Esophagus muscularis mucosa (tissue), 4 donors: ENCODE measurements at regions of chr20 and their contacts with region 1.

Region 1: DNA sequence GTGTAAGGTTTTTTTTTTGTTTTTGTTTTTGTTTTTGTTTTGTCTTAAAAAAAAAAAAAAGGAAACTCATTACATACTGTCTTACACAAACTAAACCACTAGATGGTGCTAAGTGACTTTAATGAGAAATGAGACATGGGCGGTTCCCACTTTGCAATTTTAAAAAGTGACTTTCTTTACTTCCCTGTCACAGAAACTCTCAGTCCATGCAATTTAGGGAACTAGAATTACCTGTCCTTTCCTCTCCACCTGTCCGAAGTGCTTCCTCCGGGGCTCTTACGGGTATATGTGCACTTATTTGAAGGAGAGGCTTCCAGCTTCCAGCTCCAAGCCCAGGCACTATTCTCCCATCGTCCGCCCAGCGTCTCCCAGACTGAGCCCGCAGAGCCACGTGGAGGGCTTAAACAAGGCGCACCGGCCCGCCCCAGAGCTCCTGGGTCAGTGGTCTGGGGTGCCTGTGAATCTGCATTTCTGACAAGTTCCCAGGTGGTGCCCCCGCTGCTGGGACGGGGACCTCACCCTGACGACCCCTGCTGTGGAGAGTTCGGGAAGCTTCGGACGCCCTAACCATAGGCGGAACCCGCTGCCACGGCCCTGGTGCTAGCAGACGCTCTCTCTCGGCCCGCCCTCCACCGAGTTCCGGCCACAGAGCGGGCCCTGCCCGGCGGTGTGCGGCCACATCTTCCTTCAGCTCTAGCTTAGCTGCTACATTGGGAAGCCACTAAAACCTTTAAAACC is 26.1 kb downstream of the BFSP1 start:
- DNase-seq: no peak
- H3K4me3 ChIP-seq: peak overlapping the region; percentile 54 to 66 (median 59)
- H3K27ac ChIP-seq: peak overlapping the region in 3 of 4 donors; percentile 1 to 53 (median 50)
- H3K4me1 ChIP-seq: peaks cover 8 to 19% (median 15%) of the 10 kb centered on the region in 4 donors
- H3K27me3 ChIP-seq: no peaks in the 10 kb centered on the region
- CTCF ChIP-seq: peak; percentile 62 to 82 (median 71)
- EP300 ChIP-seq: no peak
- POLR2A ChIP-seq: no peak

Region 2: GRCh38 chr20:17358874-17359273 is 146.2 kb before region 1 on chr20:
- intact Hi-C with region 1: no loop called
- DNase-seq: no peak
- H3K4me3 ChIP-seq: no peak overlapping the region
- H3K27ac ChIP-seq: no peak overlapping the region
- H3K4me1 ChIP-seq: no peaks in the 10 kb centered on the region
- H3K27me3 ChIP-seq: no peaks in the 10 kb centered on the region
- CTCF ChIP-seq: no peak
- EP300 ChIP-seq: no peak
- POLR2A ChIP-seq: no peak

Region 3: DNA sequence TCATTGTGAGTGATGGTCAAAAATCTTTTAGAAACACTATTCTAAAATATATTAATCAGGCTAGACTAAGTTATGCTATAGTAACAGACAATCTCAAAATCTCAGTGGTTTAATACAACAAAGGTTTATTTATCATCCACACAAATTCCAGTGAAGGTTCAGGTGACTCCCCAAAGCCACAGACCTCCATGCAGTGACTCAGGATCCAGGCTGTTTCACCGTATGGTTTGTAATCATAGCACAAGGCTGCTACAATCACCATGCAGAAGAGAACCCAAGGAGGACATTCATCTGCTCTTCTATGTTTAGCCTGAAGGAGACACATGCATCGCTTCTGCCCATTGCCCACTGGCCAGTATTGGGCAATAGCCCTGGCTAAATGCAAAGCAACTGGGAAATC is 20.1 kb before region 1 on chr20:
- intact Hi-C with region 1: no loop called
- DNase-seq: no peak
- H3K4me3 ChIP-seq: no peak overlapping the region
- H3K27ac ChIP-seq: no peak overlapping the region
- H3K4me1 ChIP-seq: no peaks in the 10 kb centered on the region
- H3K27me3 ChIP-seq: peaks cover 0 to 7% (median 0%) of the 10 kb centered on the region in 4 donors
- CTCF ChIP-seq: no peak
- EP300 ChIP-seq: no peak
- POLR2A ChIP-seq: no peak

Region 4: DNA sequence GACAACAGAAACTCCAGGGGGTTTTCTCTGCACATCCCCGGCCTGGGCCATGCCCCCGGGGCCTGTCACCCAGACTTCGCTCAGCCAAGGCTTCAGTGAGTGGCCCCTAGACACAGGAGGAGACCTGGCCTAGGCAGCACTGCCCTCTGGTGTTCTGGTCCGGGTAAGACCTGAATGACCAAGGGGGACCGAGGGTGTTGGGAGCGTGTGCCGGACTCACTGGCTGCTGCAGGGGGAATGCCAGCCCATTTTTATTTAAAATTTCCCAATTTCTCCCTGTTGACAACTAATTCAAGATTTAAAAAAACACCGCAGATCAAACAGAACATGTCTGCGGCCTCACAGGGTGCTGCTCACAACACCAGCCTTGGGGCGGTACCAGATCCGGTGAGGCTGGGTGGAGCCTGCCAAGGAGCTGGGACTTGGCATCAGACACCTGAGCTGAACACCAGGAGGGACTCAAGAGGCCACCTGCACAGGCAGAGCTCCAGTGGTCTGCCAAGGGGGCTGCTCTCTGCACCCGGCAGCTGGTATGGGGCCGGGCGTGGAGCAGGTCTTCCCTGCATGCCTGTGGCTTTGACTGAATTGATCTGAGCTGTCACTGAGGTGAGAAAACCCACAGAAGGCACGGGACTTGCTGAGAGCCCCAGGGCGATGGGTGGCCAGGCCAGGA is 112.6 kb after region 1 on chr20:
- intact Hi-C with region 1: loop called (anchors 2 kb)
- DNase-seq: no peak
- H3K4me3 ChIP-seq: no peak overlapping the region
- H3K27ac ChIP-seq: peak overlapping the region in 1 of 4 donors; percentile 13
- H3K4me1 ChIP-seq: peaks cover 30 to 55% (median 53%) of the 10 kb centered on the region in 4 donors
- H3K27me3 ChIP-seq: no peaks in the 10 kb centered on the region
- CTCF ChIP-seq: peak; percentile 77 to 90 (median 83)
- EP300 ChIP-seq: no peak
- POLR2A ChIP-seq: no peak

Region 5: GRCh38 chr20:17904027-17904426 is 399.0 kb after region 1 on chr20:
- intact Hi-C with region 1: loop called (anchors 5 kb)
- DNase-seq: no peak
- H3K4me3 ChIP-seq: no peak overlapping the region
- H3K27ac ChIP-seq: no peak overlapping the region
- H3K4me1 ChIP-seq: no peaks in the 10 kb centered on the region
- H3K27me3 ChIP-seq: no peaks in the 10 kb centered on the region
- CTCF ChIP-seq: no peak
- EP300 ChIP-seq: no peak
- POLR2A ChIP-seq: no peak

Region 6: DNA sequence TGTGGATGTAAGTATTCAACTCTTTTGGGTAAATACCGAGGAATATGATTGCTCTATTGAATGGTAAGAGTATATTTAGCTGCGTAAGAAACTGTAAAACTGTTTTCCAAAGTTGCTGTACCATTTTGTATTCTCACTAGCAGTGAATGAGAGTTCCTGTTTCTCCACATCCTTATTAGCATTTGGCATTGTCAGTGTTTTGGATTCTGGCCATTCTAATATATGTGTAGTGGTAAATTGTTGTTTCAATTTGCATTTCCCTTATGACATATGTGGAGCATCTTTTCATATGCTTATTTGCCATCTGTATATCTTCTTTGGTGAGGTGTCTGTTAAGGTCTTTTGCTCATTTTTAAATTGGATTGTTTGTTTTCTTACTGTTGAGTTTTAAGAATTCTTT is 603.3 kb after region 1 on chr20:
- intact Hi-C with region 1: no loop called
- DNase-seq: no peak
- H3K4me3 ChIP-seq: no peak overlapping the region
- H3K27ac ChIP-seq: no peak overlapping the region
- H3K4me1 ChIP-seq: no peaks in the 10 kb centered on the region
- H3K27me3 ChIP-seq: no peaks in the 10 kb centered on the region
- CTCF ChIP-seq: no peak
- EP300 ChIP-seq: no peak
- POLR2A ChIP-seq: no peak